Right ventricle myocardium inferior (tissue), 1 donor: ENCODE measurements at regions of chr7 and their contacts with region 1.

Region 1: DNA sequence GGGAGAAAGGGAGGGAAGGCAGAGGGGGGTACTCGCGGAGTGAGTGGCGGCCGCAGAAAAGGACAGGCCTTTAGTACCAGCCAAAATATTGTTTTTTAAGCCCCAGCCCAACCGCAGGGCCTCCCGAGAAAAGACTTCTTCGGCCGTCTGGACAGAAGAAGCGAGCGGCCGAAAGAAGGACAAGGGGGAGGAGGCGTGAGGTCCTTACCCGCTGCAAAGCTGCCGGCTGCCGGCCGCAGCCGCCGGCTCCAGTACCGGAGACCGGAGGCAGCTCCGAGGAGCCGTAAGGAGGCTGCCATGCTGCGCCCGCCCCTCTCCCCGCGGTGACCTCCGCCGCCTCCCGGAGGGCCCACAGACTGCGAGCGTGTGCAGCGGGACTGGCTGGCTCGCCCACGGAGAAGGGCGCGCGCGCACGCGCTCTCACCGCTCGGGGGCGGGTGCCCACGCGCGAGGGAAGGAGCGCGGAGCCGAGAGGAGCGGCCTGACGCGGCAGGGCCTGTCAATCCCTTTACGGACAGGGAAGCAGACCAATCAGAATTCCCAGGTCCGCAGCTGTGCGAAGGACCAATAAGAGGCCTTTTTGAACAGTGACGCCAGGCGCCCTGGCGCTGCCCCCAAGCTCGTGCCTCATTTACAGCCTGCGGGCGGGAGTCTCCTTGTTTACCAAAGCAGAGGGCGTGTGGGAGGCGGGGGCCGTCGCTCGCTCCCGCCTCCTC is at the start of gene HIBADH:
- DNase-seq: peak; percentile 99
- ATAC-seq: peak; percentile 99
- total RNA-seq, gene HIBADH: 108 TPM

Region 2: GRCh38 chr7:27739909-27740448 is 77.3 kb after region 1 on chr7 and contains the start of gene TAX1BP1:
- intact Hi-C with region 1: loop called (anchors 1 kb)
- DNase-seq: peak; percentile 98
- ATAC-seq: peak; percentile 99
- total RNA-seq, gene TAX1BP1: 169 TPM

Region 3: GRCh38 chr7:27784393-27785053 is 121.9 kb after region 1 on chr7:
- intact Hi-C with region 1: loop called (anchors 5 kb)
- DNase-seq: no peak
- ATAC-seq: no peak

Region 4: DNA sequence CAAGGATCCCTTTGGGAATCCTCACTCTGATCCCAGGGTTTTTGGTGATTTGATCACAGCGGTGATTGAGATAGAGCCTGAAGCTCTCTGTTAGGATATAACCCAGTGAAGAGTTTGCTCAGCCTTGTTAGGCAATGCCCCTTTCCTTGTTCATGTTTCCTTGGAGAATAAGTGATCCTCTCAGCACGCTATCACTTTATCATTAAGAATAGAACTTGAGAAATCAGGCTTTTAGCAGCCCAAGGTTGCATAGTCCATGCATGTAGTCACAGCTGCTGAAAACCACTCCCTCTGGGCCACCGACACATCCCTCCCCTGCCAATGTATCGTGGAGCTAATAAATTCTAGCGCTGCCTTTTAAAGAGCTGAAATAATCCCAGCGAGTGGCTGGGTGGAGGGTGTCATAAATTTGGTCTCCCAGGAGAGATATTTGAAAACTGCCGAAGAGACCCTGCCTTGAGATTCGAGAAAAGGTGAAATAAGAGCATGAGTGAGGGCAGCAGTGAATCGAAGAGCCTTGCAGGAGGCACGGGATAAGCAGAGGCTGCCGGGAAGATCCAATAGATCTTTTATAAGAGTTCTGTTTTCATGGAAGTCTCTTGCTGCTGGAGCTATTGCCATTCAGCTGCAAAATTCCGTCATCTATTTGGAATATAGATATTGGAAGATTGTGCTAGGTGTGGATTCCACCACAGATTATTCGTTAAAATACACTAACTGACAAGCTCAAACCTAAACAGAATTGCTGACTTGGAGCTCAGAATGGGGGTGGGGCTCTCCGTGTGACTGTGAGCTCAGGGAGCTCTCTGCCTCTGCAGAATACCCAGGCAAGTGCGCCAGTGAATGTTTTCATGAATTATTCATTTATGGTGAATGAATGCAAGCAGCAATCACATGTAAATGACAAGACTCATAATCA is 1045.6 kb after region 1 on chr7:
- intact Hi-C with region 1: no loop called
- DNase-seq: no peak
- ATAC-seq: peak; percentile 87